Dendritic cell treated with granulocyte-macrophage colony-stimulating factor and Interleukin-4, amounts not matched to agents 40 ng/mL and 50 ng/mL, for 4 days (primary cell): ENCODE measurements at regions of chrX and their contacts with region 1.

Region 1: GRCh38 chrX:155819966-155820491 is 61.1 kb upstream of the VAMP7 start:
- H3K4me3 Mint-ChIP-seq: no peak overlapping the region
- H3K27ac Mint-ChIP-seq: no peak overlapping the region
- H3K4me1 Mint-ChIP-seq: peaks cover 5% of the 10 kb centered on the region
- H3K27me3 Mint-ChIP-seq: no peaks in the 10 kb centered on the region

Region 2: DNA sequence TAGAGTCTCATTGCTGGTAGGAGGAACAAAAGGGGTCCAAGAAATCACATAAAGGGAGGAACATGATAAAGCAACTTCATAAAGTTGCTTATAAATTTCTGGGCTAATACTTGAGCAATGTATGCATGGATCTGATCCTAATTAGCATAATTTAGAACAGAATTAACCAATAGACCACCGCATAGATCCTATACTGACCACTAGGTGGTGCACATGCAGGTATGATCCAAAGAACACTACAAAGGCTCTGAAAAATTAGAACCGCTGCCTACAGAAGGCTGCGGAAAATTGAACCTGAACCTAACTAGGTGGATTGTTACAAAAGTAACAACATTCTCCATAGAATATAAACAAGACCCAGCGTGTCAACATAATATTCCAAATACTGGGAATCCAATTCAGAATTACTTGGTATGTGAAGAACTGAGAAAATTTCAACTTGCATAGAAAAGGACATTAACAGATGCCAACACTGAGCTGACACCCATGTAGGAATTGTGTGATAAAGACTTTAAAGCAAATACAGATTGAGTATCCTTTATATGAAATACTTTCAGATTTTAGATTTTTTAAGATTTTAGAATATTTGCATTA is 725.5 kb before region 1 on chrX:
- intact Hi-C with region 1: loop called (anchors 5 kb)
- H3K4me3 Mint-ChIP-seq: no peak overlapping the region
- H3K27ac Mint-ChIP-seq: no peak overlapping the region
- H3K4me1 Mint-ChIP-seq: no peaks in the 10 kb centered on the region
- H3K27me3 Mint-ChIP-seq: no peaks in the 10 kb centered on the region